ENCODE measurements at regions of chr6 and their contacts with region 1.

Region 1: DNA sequence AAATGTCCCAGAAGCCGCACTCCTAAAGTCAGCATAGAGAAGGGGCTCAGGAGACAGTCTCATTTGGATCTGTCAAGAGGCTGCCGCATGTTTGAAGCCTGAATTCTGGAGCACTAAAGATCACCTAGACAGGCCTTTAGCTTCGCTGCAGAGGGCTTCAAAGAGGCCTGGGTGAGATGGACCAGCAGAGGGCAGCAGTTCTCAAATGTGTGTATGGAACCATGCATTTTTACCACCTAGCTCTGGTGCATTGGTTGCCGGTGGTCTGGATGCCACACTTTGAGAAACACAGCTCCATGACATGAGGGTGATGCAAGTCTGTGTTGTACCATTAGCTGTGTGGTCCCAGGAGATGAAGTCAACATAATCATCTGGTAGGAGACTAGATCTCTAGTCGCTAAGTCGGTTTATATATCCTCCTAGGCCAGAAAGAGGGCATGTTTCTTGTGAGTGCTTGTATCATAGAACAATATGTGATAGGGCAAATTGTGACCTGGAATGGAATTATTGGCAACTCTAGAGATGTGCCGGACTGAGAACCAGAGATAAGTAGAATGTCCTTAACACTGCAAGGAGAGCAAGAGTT is 64.8 kb downstream of the KIAA0319 start:
- DNase-seq: peak; percentile 78 to 80
- H3K4me3 ChIP-seq: no peak overlapping the region
- H3K4me3 Mint-ChIP-seq: no peak overlapping the region
- H3K27ac Mint-ChIP-seq: no peak overlapping the region
- H3K4me1 ChIP-seq: 0 out of 2 replicates have a peak, but pooled peaks cover 5% of the 10 kb centered on the region
- H3K4me1 Mint-ChIP-seq: peaks cover 8% of the 10 kb centered on the region
- H3K27me3 ChIP-seq: no peaks in the 10 kb centered on the region
- H3K27me3 Mint-ChIP-seq: no peaks in the 10 kb centered on the region
- CTCF ChIP-seq: peak; percentile 68 to 85

Region 2: GRCh38 chr6:24520929-24521546 is 60.1 kb before region 1 on chr6:
- CTCF ChIA-PET with region 1: interaction called, 4 read pairs
- POLR2A ChIA-PET with region 1: no interaction called
- intact Hi-C with region 1: loop called (anchors 2 kb)
- DNase-seq: peak; percentile 70 to 79
- H3K4me3 ChIP-seq: no peak overlapping the region
- H3K4me3 Mint-ChIP-seq: no peak overlapping the region
- H3K27ac Mint-ChIP-seq: no peak overlapping the region
- H3K4me1 ChIP-seq: no peaks in the 10 kb centered on the region
- H3K4me1 Mint-ChIP-seq: peaks cover 12% of the 10 kb centered on the region
- H3K27me3 ChIP-seq: no peaks in the 10 kb centered on the region
- H3K27me3 Mint-ChIP-seq: no peaks in the 10 kb centered on the region
- CTCF ChIP-seq: peak; percentile 76 to 93

Region 3: DNA sequence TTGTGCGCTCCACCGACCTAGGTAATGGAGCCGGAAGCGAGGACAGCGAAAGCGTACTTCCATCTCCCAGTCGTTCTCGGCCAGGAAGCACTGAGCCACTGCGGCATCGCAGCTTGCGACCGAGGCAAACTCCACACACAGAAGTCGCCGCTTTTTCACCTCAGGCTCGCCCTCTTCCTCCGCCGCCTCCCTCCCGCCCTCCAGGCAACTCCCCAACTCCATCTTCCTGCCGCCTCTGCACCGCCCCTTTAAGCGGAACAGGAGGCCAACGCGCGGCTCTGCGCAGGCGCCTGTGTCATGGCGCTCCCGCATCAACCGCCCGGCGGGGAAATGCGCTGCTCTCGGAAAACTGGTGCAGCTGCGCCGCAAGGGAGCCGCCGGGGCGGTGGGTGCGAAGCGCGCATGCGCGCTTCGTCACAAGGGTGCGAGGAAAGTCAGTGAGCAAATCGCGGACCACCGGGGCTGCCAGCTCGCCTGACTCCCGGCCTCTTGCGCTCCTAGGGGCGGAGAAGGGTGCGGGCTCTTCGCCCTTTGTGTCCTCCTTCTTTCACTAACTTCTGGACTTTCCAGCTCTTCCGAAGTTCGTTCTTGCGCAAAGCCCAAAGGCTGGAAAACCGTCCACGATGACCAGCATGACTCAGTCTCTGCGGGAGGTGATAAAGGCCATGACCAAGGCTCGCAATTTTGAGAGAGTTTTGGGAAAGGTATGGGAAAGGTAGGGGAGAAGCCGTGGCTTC is 85.6 kb after region 1 on chr6 and contains the starts of genes ACOT13 and TDP2:
- CTCF ChIA-PET with region 1: interaction called, 12 read pairs
- POLR2A ChIA-PET with region 1: interaction called, 4 read pairs
- intact Hi-C with region 1: loop called (anchors 1 kb)
- DNase-seq: peak; percentile 94 to 96
- H3K4me3 ChIP-seq: peak within 1 kb of the TSS; percentile 90
- H3K4me3 Mint-ChIP-seq: peak within 1 kb of the TSS; percentile 85
- H3K27ac Mint-ChIP-seq: peak within 1 kb of the TSS; percentile 94
- H3K4me1 ChIP-seq: peaks cover 29% of the 10 kb centered on the region
- H3K4me1 Mint-ChIP-seq: peaks cover 32% of the 10 kb centered on the region
- H3K27me3 ChIP-seq: no peaks in the 10 kb centered on the region
- H3K27me3 Mint-ChIP-seq: no peaks in the 10 kb centered on the region
- CTCF ChIP-seq: peak; percentile 52 to 62
- total RNA-seq, gene ACOT13: 55.6 and 63.1 TPM in 2 replicates
- total RNA-seq, gene TDP2: 46.7 and 47.2 TPM in 2 replicates

Region 4: GRCh38 chr6:24766680-24767462 is 185.7 kb after region 1 on chr6:
- CTCF ChIA-PET with region 1: no interaction called
- POLR2A ChIA-PET with region 1: no interaction called
- intact Hi-C with region 1: loop called (anchors 1 kb)
- DNase-seq: no peak
- H3K4me3 ChIP-seq: no peak overlapping the region
- H3K4me3 Mint-ChIP-seq: no peak overlapping the region
- H3K27ac Mint-ChIP-seq: no peak overlapping the region
- H3K4me1 ChIP-seq: no peaks in the 10 kb centered on the region; the same call in 1 of the 2 replicates
- H3K4me1 Mint-ChIP-seq: peaks cover 14% of the 10 kb centered on the region
- H3K27me3 ChIP-seq: no peaks in the 10 kb centered on the region
- H3K27me3 Mint-ChIP-seq: no peaks in the 10 kb centered on the region
- CTCF ChIP-seq: peak; percentile 32

Measured in Caco-2 (cell line).